A673 (cell line): ENCODE measurements at regions of chr12 and their contacts with region 1.

Region 1: DNA sequence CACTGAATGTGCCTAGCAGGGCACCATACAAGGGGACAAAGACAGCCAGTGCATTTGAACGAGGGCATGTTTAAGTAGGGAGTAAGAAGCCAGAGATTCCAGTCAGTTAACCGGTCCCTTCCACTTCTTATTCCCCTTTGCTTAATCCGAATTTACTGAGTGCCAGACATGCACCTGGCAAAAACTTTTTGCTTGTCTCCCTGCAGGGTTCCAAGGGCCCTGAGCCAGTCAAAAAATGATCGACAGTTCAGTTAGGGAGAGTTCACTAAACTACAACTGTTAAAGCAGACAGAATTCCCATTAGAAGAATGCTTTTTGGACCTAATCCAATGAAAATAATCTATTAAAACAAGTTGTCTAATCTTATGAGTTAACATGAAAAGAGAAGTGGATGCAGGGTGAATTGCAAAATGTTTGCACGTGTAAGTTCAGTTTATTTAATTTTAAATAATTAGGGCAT is 193.8 kb downstream of the TMTC2 start:
- DNase-seq: peak; percentile 14
- H3K4me3 ChIP-seq: no peak overlapping the region
- H3K27ac ChIP-seq: no peak overlapping the region
- H3K4me1 ChIP-seq: peaks cover 24% of the 10 kb centered on the region
- H3K27me3 ChIP-seq: no peaks in the 10 kb centered on the region
- CTCF ChIP-seq: no peak

Region 2: DNA sequence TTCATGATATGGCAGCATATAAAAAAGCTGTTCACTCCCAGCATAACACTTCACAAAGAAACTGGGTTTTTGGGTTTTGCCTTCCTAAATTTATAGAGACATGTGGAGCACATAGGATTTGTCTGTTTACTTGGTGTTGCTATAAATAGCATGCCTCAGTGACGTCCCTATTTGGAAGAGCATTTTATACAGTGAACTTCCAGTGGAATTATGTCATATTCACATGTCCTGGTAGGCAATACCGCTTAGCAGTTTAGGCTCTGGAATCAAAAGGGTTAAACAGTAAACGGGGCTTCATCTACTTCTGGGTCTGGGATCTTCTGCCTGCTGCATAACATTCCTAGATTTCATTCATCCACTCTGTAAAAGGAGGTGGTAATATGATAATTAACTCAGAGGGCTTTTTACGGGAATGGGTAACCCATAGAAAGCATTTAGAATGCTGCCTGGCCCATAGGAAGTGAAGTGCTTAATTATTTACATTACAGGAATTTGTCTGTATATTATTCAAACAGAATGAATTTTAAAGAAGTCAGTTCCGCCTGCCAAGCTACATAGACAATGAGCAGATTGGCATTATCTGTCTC is 202.3 kb after region 1 on chr12:
- CTCF ChIA-PET with region 1: no interaction called
- POLR2A ChIA-PET with region 1: no interaction called
- intact Hi-C with region 1: no loop called
- DNase-seq: peak; percentile 19
- H3K4me3 ChIP-seq: no peak overlapping the region
- H3K27ac ChIP-seq: no peak overlapping the region
- H3K4me1 ChIP-seq: peaks cover 7% of the 10 kb centered on the region
- H3K27me3 ChIP-seq: no peaks in the 10 kb centered on the region
- CTCF ChIP-seq: no peak

Region 3: GRCh38 chr12:83224012-83224411 is 343.5 kb after region 1 on chr12:
- CTCF ChIA-PET with region 1: no interaction called
- POLR2A ChIA-PET with region 1: interaction called, 19 read pairs
- intact Hi-C with region 1: no loop called
- DNase-seq: peak; percentile 24
- H3K4me3 ChIP-seq: no peak overlapping the region
- H3K27ac ChIP-seq: no peak overlapping the region
- H3K4me1 ChIP-seq: no peaks in the 10 kb centered on the region
- H3K27me3 ChIP-seq: no peaks in the 10 kb centered on the region
- CTCF ChIP-seq: no peak